WTC11 (cell line): ENCODE measurements at regions of chr17 and their contacts with region 1.

Region 1: GRCh38 chr17:74770498-74771318 is 5.4 kb downstream of the NAT9 start:
- DNase-seq: peak; percentile 78
- ATAC-seq: peak; percentile 91
- H3K4me3 Mint-ChIP-seq: no peak overlapping the region
- H3K27ac Mint-ChIP-seq: no peak overlapping the region; the same call in none of the 2 replicates
- H3K4me1 Mint-ChIP-seq: peaks cover 9% of the 10 kb centered on the region
- H3K27me3 Mint-ChIP-seq: no peaks in the 10 kb centered on the region
- CTCF ChIP-seq: peak; percentile 46; the same call in 1 of the 2 replicates

Region 2: DNA sequence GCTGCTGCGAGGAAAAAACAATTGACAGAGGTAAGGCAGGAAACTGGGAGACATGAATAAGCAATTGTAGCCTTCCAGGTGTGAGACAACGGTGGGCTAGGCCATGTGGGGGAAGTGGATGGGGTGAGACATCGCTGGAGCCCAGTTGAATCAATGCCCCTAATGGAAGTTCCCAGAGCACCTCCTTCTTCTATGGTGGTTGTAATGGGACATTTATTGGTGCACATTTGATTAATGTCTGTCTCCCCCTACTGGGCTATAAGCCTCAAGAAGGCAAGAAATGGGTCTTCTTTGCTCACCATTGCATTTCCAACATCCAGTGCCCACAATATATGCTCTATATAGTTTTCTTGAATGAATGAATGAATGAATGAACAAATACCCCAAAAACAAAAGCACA is 124.5 kb before region 1 on chr17:
- CTCF ChIA-PET with region 1: no interaction called
- POLR2A ChIA-PET with region 1: no interaction called
- DNase-seq: no peak
- ATAC-seq: peak; percentile 47
- H3K4me3 Mint-ChIP-seq: no peak overlapping the region
- H3K27ac Mint-ChIP-seq: no peak overlapping the region
- H3K4me1 Mint-ChIP-seq: peaks cover 22% of the 10 kb centered on the region
- H3K27me3 Mint-ChIP-seq: peaks cover 17% of the 10 kb centered on the region
- CTCF ChIP-seq: no peak

Region 3: DNA sequence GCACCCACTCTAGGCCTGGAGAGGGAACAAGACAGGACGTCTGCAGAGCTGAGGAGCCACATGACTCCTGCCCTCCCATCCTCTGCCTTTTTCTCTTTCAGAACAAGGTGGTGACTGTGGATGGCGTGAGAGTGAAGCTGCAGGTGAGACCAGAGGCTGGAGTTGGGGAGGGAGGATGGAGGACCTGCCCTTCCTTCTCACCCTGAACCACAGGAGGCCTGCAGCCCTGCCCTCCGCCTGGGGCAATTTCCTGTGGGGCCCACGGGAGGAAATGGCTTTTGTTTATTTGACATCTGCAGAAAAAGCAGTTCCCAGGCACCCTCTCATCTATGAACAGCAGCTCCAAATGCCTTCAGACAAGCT is 28.6 kb before region 1 on chr17:
- CTCF ChIA-PET with region 1: interaction called, 262 read pairs
- POLR2A ChIA-PET with region 1: interaction called, 14 read pairs
- DNase-seq: no peak
- ATAC-seq: no peak
- H3K4me3 Mint-ChIP-seq: no peak overlapping the region
- H3K27ac Mint-ChIP-seq: no peak overlapping the region
- H3K4me1 Mint-ChIP-seq: peaks cover 53% of the 10 kb centered on the region
- H3K27me3 Mint-ChIP-seq: peaks cover 6% of the 10 kb centered on the region
- CTCF ChIP-seq: no peak

Region 4: DNA sequence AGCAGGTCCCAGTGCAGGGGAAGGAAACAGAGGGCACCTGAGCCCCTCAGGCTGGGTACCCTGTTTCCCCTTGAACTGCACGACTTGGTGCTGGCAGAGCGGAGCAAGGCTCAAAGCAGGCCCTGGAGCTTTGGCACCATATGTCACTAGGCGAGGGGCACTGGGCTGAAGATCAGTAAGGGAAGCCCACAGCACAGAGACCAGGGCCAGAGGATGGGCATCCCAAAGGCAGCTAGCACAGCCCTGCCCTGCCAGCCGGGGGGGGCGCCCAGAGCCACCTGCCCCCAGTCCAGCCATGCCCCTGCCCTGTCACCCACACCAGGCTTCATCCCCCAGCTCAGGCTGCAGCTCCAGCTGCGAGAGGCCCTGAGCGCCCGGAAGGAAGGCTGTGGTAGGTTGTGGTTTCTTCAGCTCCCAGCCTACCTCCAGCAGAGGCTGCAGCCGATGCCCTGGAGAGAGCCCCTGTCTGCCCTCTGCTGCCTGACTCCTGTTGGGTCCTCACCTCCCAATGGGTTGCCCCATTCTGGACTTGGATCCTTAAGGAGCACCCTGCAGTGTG is 11.4 kb before region 1 on chr17:
- CTCF ChIA-PET with region 1: interaction called, 35 read pairs
- POLR2A ChIA-PET with region 1: interaction called, 4 read pairs
- DNase-seq: no peak
- ATAC-seq: no peak
- H3K4me3 Mint-ChIP-seq: no peak overlapping the region
- H3K27ac Mint-ChIP-seq: peak overlapping the region; percentile 89
- H3K4me1 Mint-ChIP-seq: peaks cover 52% of the 10 kb centered on the region
- H3K27me3 Mint-ChIP-seq: no peaks in the 10 kb centered on the region
- CTCF ChIP-seq: no peak

Region 5: DNA sequence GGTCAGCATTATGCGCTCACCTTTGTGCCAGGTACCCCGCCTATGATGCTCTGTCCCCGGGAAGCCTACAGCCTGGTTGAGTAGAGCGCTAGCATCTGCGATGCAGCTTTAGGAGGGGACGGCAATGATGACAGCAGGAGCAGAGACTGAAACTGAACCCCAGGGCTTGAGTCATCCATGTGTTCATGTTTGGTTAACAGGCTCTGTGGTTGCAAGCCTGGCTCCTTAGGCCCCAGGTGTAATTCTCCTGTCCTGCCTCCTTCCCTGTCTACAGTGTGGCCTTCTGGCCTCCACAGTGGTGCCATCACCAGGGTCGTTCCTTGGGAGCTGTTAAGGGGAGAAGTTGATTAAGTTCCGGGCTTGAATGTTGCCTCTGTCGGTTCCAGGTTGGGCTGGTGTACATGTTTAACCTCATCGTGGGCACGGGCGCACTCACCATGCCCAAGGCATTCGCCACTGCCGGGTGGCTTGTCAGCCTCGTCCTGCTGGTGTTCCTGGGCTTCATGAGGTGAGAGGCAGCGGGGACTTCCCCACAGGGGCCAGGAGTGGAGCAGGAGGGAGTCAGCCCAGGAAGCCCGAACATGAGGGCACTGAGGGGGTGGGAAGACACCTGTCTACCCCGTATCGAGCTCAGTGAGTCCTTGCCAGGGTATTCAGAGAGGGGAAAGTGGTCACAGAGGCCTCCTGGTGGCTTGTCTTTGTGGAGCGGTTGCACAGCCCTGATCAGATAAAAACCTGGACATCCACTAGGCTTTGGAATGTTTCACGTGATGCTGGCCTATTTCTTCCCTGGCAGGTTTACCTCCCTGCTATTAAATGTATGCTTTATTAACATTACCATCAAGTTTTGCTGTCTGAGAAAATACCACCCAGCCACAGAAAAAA is 14.6 kb after region 1 on chr17:
- CTCF ChIA-PET with region 1: interaction called, 14 read pairs
- POLR2A ChIA-PET with region 1: interaction called, 3 read pairs
- DNase-seq: no peak
- ATAC-seq: no peak
- H3K4me3 Mint-ChIP-seq: no peak overlapping the region
- H3K27ac Mint-ChIP-seq: no peak overlapping the region; the same call in 1 of the 2 replicates
- H3K4me1 Mint-ChIP-seq: peaks cover 26% of the 10 kb centered on the region
- H3K27me3 Mint-ChIP-seq: no peaks in the 10 kb centered on the region
- CTCF ChIP-seq: no peak